AG04449 (cell line): ENCODE measurements at regions of chr17 and their contacts with region 1.

Region 1: GRCh38 chr17:7740481-7741001 is 23.0 kb downstream of the DNAH2 start:
- DNase-seq: no peak
- H3K4me3 ChIP-seq: no peak overlapping the region
- CTCF ChIP-seq: no peak

Region 2: GRCh38 chr17:7729816-7730215 is 10.7 kb before region 1 on chr17:
- CTCF ChIA-PET with region 1: interaction called, 19 read pairs
- POLR2A ChIA-PET with region 1: no interaction called
- DNase-seq: no peak
- H3K4me3 ChIP-seq: no peak overlapping the region
- CTCF ChIP-seq: no peak

Region 3: GRCh38 chr17:7755095-7755890 is 14.8 kb after region 1 on chr17:
- CTCF ChIA-PET with region 1: interaction called, 14 read pairs
- POLR2A ChIA-PET with region 1: no interaction called
- DNase-seq: no peak
- H3K4me3 ChIP-seq: no peak overlapping the region
- CTCF ChIP-seq: no peak

Region 4: DNA sequence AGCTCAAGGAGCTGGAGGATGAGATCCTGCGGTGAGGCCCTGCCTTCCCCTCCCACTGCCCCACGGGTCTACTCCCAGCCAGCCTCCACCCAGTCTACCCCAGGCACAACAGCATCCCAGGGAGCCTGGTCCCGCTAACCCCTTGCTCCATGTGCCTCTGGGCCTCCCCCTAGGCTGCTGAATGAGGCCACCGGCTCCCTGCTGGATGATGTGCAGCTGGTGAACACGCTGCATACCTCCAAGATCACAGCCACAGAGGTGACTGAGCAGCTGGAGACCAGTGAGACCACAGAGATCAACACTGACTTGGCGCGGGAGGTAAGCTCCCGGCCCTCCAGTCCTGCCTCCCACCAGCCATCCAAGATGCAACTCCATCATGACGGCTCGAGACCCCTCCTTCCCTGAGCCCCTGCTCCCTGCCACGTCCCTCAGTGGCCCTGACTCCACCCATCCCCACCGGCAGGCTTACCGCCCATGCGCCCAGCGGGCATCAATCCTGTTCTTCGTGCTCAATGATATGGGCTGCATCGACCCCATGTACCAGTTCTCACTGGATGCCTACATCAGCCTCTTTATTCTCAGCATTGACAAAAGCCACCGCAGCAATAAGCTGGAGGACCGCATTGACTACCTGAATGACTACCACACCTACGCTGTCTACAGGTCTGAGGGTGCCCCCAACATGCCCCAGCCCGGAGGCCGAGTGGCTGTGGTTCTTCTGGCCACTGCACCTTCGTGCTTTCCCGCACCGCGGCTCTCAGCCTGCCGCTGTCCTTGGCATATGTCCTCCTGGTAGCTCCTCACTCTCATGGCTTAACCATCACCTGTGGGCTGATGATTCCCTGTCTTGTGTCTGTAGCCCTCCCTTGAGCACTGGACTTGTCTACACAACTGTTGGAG is 78.5 kb after region 1 on chr17:
- CTCF ChIA-PET with region 1: interaction called, 13 read pairs
- POLR2A ChIA-PET with region 1: no interaction called
- DNase-seq: no peak
- H3K4me3 ChIP-seq: no peak overlapping the region
- CTCF ChIP-seq: no peak